RWPE1 (cell line): ENCODE measurements at regions of chr1 and their contacts with region 1.

Region 1: GRCh38 chr1:41812051-41812450 is 106.7 kb downstream of the HIVEP3 start:
- DNase-seq: peak; percentile 65
- H3K27ac ChIP-seq: peak overlapping the region; percentile 64
- CTCF ChIP-seq: peak; percentile 45

Region 2: DNA sequence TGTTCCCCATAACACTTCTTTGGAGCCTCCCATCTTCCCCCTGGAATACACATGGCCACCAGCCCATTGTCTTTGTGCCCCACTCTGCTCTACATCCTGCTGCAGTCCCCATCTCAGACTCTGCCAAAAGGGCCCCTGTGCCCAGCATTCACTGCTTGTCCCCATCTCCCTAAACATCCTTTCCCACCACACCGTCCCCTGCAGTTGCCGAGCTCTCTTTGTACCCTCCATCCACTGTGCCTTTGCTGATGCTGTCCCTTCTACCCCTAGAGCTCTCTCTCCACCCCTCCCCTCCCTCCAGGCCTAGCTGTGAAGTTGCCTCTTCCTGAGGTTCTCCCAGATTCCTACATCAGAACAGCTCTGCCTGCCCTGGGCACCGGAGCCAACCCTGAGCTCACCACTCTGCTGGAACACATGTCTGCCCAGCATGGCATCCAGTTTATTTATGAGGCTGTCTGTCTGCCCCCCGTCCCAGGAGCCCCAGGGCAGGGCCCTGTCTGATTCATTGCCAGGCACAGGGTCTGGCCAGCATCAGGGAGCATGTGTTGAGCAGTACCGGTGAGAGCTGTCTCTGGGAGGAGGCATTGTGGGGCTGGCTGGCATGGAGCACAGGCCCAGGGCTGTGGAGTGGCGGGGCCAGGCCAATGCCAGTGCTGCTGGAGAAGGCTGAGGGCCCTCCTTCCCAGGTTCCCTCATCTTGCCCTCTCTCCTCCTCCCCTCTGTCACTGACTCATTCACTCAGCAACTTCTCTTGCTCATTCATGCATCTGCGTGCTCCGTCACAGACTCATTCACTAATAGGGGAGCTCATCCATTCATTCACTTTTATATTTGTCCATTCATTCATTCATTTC is 356.3 kb before region 1 on chr1:
- CTCF ChIA-PET with region 1: no interaction called
- POLR2A ChIA-PET with region 1: no interaction called
- DNase-seq: peak; percentile 57
- H3K27ac ChIP-seq: peak overlapping the region; percentile 83
- CTCF ChIP-seq: no peak

Region 3: GRCh38 chr1:41851589-41851988 is 39.5 kb after region 1 on chr1:
- CTCF ChIA-PET with region 1: no interaction called
- POLR2A ChIA-PET with region 1: no interaction called
- DNase-seq: peak; percentile 68
- H3K27ac ChIP-seq: peak overlapping the region; percentile 63; the same call in 1 of the 2 replicates
- CTCF ChIP-seq: no peak

Region 4: GRCh38 chr1:41862384-41863174 is 50.5 kb after region 1 on chr1:
- CTCF ChIA-PET with region 1: interaction called, 11 read pairs
- POLR2A ChIA-PET with region 1: no interaction called
- DNase-seq: peak; percentile 66
- H3K27ac ChIP-seq: peak overlapping the region; percentile 67
- CTCF ChIP-seq: no peak